MCF 10A (cell line): ENCODE measurements at regions of chr5 and their contacts with region 1.

Region 1: DNA sequence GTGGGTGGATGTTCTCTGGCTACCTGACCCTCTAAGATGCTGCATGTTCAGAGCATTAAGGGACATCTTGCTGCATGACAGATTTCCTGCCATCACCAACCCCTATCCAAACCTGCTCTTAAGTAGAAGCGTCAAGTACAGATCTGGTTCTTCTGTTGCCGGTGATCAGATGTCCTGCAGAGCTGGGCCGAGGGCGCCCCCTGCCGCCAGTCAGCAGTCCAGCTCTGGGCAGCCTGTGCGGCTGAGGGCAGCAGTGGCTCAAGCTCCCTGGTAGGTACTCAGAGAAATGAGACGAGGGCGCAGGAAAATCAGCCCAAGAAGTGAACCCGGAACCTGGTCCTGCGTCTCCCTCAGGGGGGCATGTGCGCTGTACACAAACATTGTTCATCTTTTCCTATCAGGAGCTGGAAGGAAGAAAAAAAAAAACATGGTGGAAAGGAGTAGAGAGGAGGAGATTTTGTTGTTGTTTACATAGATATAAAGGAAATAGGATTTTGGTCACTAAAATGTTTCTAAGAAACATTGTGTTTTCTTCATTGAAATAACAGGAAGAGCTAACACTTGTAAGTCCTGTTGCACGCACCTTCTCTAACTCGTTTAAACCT is 95.8 kb downstream of the CFAP90 start:
- DNase-seq: peak; percentile 63
- H3K4me3 Mint-ChIP-seq: no peak overlapping the region
- H3K27ac Mint-ChIP-seq: no peak overlapping the region
- H3K4me1 Mint-ChIP-seq: peaks cover 5% of the 10 kb centered on the region
- H3K27me3 Mint-ChIP-seq: peaks cover 91% of the 10 kb centered on the region
- CTCF ChIP-seq: peak; percentile 78

Region 2: DNA sequence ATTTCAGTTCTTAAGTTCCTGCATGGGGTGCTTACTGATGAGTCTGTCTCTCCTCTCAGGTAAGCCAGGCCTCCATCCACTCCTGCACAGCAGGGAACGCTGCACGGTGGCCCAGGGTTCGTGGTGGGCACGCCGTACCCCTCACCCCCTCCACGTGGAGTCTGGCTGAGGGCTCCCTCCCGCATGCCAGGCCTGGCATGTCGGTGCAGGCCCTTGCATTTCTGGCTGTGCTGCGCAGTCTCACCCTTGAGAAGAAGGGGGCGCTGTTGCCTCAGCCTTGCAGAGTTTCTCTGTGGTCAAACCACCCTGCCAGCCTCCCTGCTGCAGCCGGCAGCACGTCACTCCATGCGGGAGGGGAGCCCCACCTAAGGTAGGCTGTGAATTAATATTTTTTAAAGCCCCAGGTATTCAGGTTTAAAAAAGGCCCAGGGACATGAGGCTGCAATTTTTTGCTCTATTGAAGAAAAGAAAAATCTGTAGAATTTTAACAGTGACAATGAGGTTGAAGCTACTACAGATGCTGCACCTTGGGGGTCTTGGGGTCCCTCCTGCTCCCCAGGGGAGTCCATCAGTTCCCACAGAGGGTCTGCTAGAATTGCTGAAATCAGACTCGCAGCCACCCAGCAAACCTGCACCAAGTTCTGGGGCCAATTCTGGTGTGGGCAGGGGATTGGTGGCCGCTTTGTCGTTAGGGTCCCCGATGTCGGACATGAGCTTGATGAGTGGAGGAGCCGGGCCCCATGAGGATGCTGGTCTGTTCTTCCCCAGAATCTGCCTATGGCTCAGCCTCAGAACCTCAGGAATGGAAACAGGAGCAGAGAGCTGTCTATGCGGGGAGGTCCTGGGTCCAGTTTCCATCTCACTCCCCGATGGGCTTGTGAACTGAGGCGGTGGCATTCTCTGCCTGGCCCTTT is 989.2 kb before region 1 on chr5:
- CTCF ChIA-PET with region 1: interaction called, 3 read pairs
- POLR2A ChIA-PET with region 1: no interaction called
- intact Hi-C with region 1: loop called (anchors 2 kb)
- DNase-seq: peak; percentile 89
- H3K4me3 Mint-ChIP-seq: peak overlapping the region; percentile 65
- H3K27ac Mint-ChIP-seq: no peak overlapping the region
- H3K4me1 Mint-ChIP-seq: peaks cover 23% of the 10 kb centered on the region
- H3K27me3 Mint-ChIP-seq: no peaks in the 10 kb centered on the region
- CTCF ChIP-seq: peak; percentile 91

Region 3: GRCh38 chr5:6827526-6828219 is 927.4 kb before region 1 on chr5:
- CTCF ChIA-PET with region 1: no interaction called
- POLR2A ChIA-PET with region 1: no interaction called
- intact Hi-C with region 1: loop called (anchors 2 kb)
- DNase-seq: no peak
- H3K4me3 Mint-ChIP-seq: no peak overlapping the region
- H3K27ac Mint-ChIP-seq: no peak overlapping the region
- H3K4me1 Mint-ChIP-seq: peaks cover 7% of the 10 kb centered on the region
- H3K27me3 Mint-ChIP-seq: peaks cover 50% of the 10 kb centered on the region
- CTCF ChIP-seq: no peak

Region 4: GRCh38 chr5:7261049-7261448 is 494.0 kb before region 1 on chr5:
- CTCF ChIA-PET with region 1: interaction called, 10 read pairs
- POLR2A ChIA-PET with region 1: no interaction called
- intact Hi-C with region 1: loop called (anchors 2 kb)
- DNase-seq: peak; percentile 25
- H3K4me3 Mint-ChIP-seq: no peak overlapping the region
- H3K27ac Mint-ChIP-seq: no peak overlapping the region
- H3K4me1 Mint-ChIP-seq: no peaks in the 10 kb centered on the region
- H3K27me3 Mint-ChIP-seq: peaks cover 2% of the 10 kb centered on the region
- CTCF ChIP-seq: peak; percentile 45

Region 5: GRCh38 chr5:7592910-7593309 is 162.2 kb before region 1 on chr5:
- CTCF ChIA-PET with region 1: no interaction called
- POLR2A ChIA-PET with region 1: interaction called, 3 read pairs
- intact Hi-C with region 1: loop called (anchors 10 kb)
- DNase-seq: peak; percentile 1
- H3K4me3 Mint-ChIP-seq: no peak overlapping the region
- H3K27ac Mint-ChIP-seq: no peak overlapping the region
- H3K4me1 Mint-ChIP-seq: no peaks in the 10 kb centered on the region
- H3K27me3 Mint-ChIP-seq: peaks cover 38% of the 10 kb centered on the region
- CTCF ChIP-seq: peak; percentile 20

Region 6: DNA sequence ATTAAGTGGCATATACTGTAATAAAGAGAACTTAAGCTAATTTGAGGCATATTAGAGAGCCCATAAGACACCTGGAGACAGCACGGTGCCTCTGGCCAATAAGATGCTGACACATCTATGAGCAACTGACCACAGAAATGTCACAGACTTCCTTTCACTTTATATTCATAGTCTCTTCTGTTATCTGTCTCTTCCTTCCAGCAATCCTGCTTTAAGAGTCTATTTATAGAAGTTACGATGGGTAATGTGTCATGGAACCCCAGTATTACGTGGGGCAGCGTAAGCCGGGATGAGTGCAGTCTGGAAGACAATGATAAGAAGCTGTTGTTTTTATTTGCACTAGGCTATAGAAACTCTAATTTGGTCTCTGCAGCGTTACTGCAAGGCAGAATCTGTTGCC is 41.0 kb before region 1 on chr5:
- CTCF ChIA-PET with region 1: no interaction called
- POLR2A ChIA-PET with region 1: no interaction called
- intact Hi-C with region 1: no loop called
- DNase-seq: no peak
- H3K4me3 Mint-ChIP-seq: no peak overlapping the region
- H3K27ac Mint-ChIP-seq: no peak overlapping the region
- H3K4me1 Mint-ChIP-seq: no peaks in the 10 kb centered on the region
- H3K27me3 Mint-ChIP-seq: peaks cover 33% of the 10 kb centered on the region
- CTCF ChIP-seq: no peak

Region 7: GRCh38 chr5:7770436-7770835 is 15.3 kb after region 1 on chr5:
- CTCF ChIA-PET with region 1: interaction called, 15 read pairs
- POLR2A ChIA-PET with region 1: no interaction called
- intact Hi-C with region 1: no loop called
- DNase-seq: no peak
- H3K4me3 Mint-ChIP-seq: no peak overlapping the region
- H3K27ac Mint-ChIP-seq: no peak overlapping the region
- H3K4me1 Mint-ChIP-seq: no peaks in the 10 kb centered on the region
- H3K27me3 Mint-ChIP-seq: peaks cover 66% of the 10 kb centered on the region
- CTCF ChIP-seq: no peak

Region 8: GRCh38 chr5:7856855-7857254 is 101.8 kb after region 1 on chr5:
- CTCF ChIA-PET with region 1: interaction called, 3 read pairs
- POLR2A ChIA-PET with region 1: no interaction called
- intact Hi-C with region 1: loop called (anchors 5 kb)
- DNase-seq: peak; percentile 48
- H3K4me3 Mint-ChIP-seq: no peak overlapping the region
- H3K27ac Mint-ChIP-seq: no peak overlapping the region
- H3K4me1 Mint-ChIP-seq: no peaks in the 10 kb centered on the region
- H3K27me3 Mint-ChIP-seq: no peaks in the 10 kb centered on the region
- CTCF ChIP-seq: peak; percentile 44